Naive thymus-derived CD8-positive, alpha-beta T cell (primary cell): ENCODE measurements at regions of chr13 and their contacts with region 1.

Region 1: GRCh38 chr13:30371649-30372265 is 50.5 kb upstream of the UBE2L5 start:
- DNase-seq: peak in 9 of 10 donors; percentile 54 to 90 (median 84)
- ATAC-seq: peak; percentile 64 to 71
- H3K4me3 Mint-ChIP-seq: peak overlapping the region; percentile 61 to 89 (median 79)
- H3K27ac Mint-ChIP-seq: peak overlapping the region; percentile 89 to 99 (median 95)
- H3K4me1 Mint-ChIP-seq: peaks cover 60 to 85% (median 81%) of the 10 kb centered on the region in 4 donors
- H3K27me3 Mint-ChIP-seq: no peaks in the 10 kb centered on the region

Region 2: DNA sequence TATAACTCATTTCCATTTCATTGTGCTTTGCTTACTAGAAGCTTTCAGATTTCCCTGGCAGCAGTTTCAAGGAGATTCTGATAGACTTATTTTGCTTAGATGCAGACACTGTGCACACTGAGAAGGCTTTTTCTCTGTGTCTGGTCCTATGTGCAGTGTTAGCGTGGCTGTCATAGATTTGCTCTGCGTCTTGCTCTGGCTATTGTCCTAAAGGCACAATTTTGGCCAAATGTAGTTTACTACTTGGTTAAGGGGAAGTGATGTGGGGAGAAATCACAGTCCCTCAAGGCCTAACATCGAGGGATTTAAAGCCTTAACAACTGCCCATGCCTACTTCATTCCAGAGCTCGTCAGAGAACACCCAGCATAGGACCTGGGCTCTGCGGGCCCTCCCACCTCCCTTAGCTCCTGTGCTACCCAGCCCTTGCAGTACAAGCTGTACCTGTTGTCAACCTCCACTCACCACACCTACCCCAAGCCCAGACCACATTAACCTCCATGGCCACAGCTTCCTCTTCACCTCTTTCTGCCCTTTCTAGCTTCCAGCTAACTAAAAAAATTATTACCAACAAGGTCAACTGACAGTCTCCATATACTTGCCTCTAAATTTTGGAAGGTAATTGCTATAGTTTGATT is 25.5 kb before region 1 on chr13:
- POLR2A ChIA-PET with region 1: interaction called, 36 read pairs
- DNase-seq: peak; percentile 16 to 87 (median 74)
- ATAC-seq: peak; percentile 97 to 99
- H3K4me3 Mint-ChIP-seq: peak overlapping the region; percentile 46 to 80 (median 72)
- H3K27ac Mint-ChIP-seq: peak overlapping the region; percentile 1 to 89 (median 50)
- H3K4me1 Mint-ChIP-seq: peaks cover 31 to 61% (median 50%) of the 10 kb centered on the region in 4 donors
- H3K27me3 Mint-ChIP-seq: peaks cover 0 to 2% (median 0%) of the 10 kb centered on the region in 5 donors

Region 3: GRCh38 chr13:30382836-30383525 is 11.2 kb after region 1 on chr13:
- POLR2A ChIA-PET with region 1: interaction called, 56 read pairs
- DNase-seq: peak in 1 of 10 donors; percentile 36
- ATAC-seq: peak; percentile 22 to 61
- H3K4me3 Mint-ChIP-seq: peak overlapping the region in 7 of 10 donors; percentile 13 to 64 (median 47)
- H3K27ac Mint-ChIP-seq: peak overlapping the region; percentile 19 to 83 (median 52)
- H3K4me1 Mint-ChIP-seq: peaks cover 22 to 56% (median 39%) of the 10 kb centered on the region in 4 donors
- H3K27me3 Mint-ChIP-seq: no peaks in the 10 kb centered on the region

Region 4: DNA sequence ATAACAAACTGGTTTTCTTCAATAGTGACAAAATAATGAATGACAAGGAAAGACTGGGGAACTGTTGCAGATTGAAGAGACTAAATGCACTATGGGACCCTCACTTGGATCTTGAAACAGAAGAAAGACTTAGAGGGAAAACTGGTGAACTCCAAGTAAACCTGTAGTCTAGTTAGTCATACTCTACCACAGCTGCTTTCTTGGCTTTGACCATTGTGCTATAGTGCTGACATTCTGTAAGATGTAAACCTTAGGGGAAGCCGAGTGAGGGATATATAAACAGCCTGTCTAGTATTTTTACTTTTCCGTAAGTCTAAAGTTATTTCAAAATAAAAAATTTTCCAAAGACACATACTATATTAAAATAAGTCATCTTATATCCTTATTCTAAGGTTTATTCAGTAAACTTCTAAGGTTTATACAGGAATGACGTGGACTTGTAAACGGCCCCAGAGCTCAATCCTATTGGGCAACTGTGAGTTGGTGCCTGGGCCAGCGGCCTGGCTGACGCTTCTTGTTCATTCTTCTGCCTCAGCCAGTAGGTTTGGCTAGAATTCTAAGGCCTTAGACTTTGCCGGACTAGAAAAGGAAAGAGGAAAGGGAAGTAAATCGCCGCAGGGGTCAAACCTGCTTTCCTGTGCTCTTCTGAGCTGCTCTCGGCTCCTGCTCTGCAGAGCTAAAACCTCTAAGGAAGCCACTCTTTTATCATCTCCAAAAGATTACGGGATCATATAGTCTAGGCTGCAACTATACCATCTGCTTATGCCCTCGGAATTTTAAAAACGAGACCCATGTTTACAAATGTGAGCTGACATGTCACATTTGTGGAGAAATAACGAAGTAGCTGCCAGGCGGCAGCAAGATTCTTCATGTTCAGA is 16.9 kb after region 1 on chr13:
- POLR2A ChIA-PET with region 1: interaction called, 121 read pairs
- DNase-seq: peak in 1 of 10 donors; percentile 15
- ATAC-seq: no peak
- H3K4me3 Mint-ChIP-seq: peak overlapping the region; percentile 63 to 85 (median 81)
- H3K27ac Mint-ChIP-seq: peak overlapping the region; percentile 75 to 94 (median 89)
- H3K4me1 Mint-ChIP-seq: peaks cover 25 to 59% (median 45%) of the 10 kb centered on the region in 4 donors
- H3K27me3 Mint-ChIP-seq: no peaks in the 10 kb centered on the region

Region 5: GRCh38 chr13:30395192-30396084 is 23.7 kb after region 1 on chr13:
- POLR2A ChIA-PET with region 1: interaction called, 121 read pairs
- DNase-seq: peak; percentile 41 to 90 (median 70)
- ATAC-seq: peak; percentile 69 to 81
- H3K4me3 Mint-ChIP-seq: peak overlapping the region; percentile 80 to 100 (median 92)
- H3K27ac Mint-ChIP-seq: peak overlapping the region; percentile 78 to 100 (median 96)
- H3K4me1 Mint-ChIP-seq: peaks cover 25 to 62% (median 49%) of the 10 kb centered on the region in 4 donors
- H3K27me3 Mint-ChIP-seq: no peaks in the 10 kb centered on the region

Region 6: GRCh38 chr13:30408319-30409101 is 36.8 kb after region 1 on chr13:
- POLR2A ChIA-PET with region 1: interaction called, 16 read pairs
- DNase-seq: peak; percentile 78 to 93 (median 86)
- ATAC-seq: peak; percentile 92 to 93
- H3K4me3 Mint-ChIP-seq: peak overlapping the region; percentile 62 to 81 (median 74)
- H3K27ac Mint-ChIP-seq: peak overlapping the region; percentile 72 to 92 (median 82)
- H3K4me1 Mint-ChIP-seq: peaks cover 14 to 41% (median 35%) of the 10 kb centered on the region in 4 donors
- H3K27me3 Mint-ChIP-seq: no peaks in the 10 kb centered on the region

Region 7: GRCh38 chr13:30465585-30466357 is 94.0 kb after region 1 on chr13 and contains the start of gene HMGB1:
- POLR2A ChIA-PET with region 1: interaction called, 25 read pairs
- DNase-seq: peak; percentile 86 to 99 (median 96)
- ATAC-seq: peak; percentile 87 to 88
- H3K4me3 Mint-ChIP-seq: peak within 1 kb of the TSS; percentile 88 to 99 (median 96)
- H3K27ac Mint-ChIP-seq: peak within 1 kb of the TSS; percentile 97 to 99 (median 98)
- H3K4me1 Mint-ChIP-seq: peaks cover 10 to 47% (median 24%) of the 10 kb centered on the region in 4 donors
- H3K27me3 Mint-ChIP-seq: peaks cover 0 to 13% (median 0%) of the 10 kb centered on the region in 5 donors
- polyA plus RNA-seq, gene HMGB1: 468 to 703 (median 554) TPM